Sigmoid colon (tissue), 7 donors: ENCODE measurements at regions of chr17 and their contacts with region 1.

Region 1: DNA sequence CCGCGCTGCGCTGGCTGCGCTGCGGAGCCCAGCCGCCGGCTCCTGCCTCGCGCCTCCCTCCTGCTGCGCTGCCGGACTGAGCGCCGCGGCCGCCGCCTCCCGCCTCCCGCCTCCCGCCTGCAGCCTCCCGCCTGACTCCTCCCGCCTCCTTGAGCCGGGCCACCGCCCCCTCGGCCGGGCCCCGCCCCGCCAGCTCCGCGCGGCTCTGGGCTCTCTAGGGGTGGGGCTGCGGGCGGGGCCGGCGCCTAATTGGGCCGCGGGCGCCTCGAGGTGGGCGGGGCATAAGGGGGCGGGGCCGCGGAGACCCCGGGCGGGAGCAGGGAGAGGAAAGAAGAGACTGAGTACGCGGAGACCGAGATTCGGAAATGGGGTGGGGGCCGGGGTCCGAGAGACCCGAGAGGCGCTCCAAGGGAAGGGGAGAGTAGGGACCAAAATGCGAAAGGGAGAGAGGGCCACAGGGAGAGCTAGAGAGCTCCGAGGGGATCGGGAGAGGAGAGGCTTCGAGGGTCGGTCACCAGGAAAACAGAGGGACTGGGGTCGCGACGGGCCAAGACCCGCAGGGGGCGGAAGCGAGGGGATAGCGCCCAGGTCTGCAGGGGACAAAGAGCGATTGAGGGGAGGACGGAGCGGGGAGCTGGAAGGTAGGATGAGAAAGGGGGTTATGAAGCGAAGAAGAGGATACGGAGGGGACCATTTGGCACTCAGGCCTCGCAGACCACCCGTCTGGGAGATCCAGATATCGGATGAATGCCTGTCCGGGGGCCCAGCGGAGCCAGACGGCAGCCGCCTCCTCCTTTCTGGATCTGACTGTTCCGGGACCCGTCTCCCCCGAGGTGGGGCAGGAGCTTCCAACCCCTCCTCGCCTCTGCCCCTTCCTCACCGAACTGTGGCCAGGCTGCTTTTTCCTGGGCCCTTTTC is at the start of gene C1QL1:
- DNase-seq: peak; percentile 96
- H3K4me3 ChIP-seq: peak within 1 kb of the TSS; percentile 42 to 50 (median 48)
- H3K27ac ChIP-seq: peak within 1 kb of the TSS; percentile 20 to 83 (median 67)
- H3K4me1 ChIP-seq: peaks cover 0 to 40% (median 33%) of the 10 kb centered on the region in 4 donors
- H3K27me3 ChIP-seq: peaks cover 19 to 33% (median 29%) of the 10 kb centered on the region in 3 donors
- CTCF ChIP-seq: peak in 1 of 4 experiments; percentile 11
- EP300 ChIP-seq: no peak
- POLR2A ChIP-seq: peak in 1 of 2 donors; percentile 39
- total RNA-seq, gene C1QL1: 0.41 to 4.3 (median 1.3) TPM

Region 2: GRCh38 chr17:44947461-44948314 is 20.8 kb before region 1 on chr17 and contains the start of gene KIF18B:
- intact Hi-C with region 1: loop called (anchors 2 kb)
- DNase-seq: peak; percentile 95
- H3K4me3 ChIP-seq: peak within 1 kb of the TSS; percentile 27 to 61 (median 50)
- H3K27ac ChIP-seq: peak within 1 kb of the TSS; percentile 42 to 65 (median 60)
- H3K4me1 ChIP-seq: peaks cover 0 to 12% (median 9%) of the 10 kb centered on the region in 4 donors
- H3K27me3 ChIP-seq: no peaks in the 10 kb centered on the region
- CTCF ChIP-seq: no peak
- EP300 ChIP-seq: no peak
- POLR2A ChIP-seq: peak; percentile 52 to 64
- total RNA-seq, gene KIF18B: under 0.01 to 1.4 (median 0.30) TPM

Region 3: GRCh38 chr17:44981221-44981968 is 12.9 kb after region 1 on chr17:
- intact Hi-C with region 1: no loop called
- DNase-seq: no peak
- H3K4me3 ChIP-seq: no peak overlapping the region
- H3K27ac ChIP-seq: peak overlapping the region in 3 of 4 donors; percentile 77 to 82 (median 79)
- H3K4me1 ChIP-seq: peaks cover 0 to 57% (median 52%) of the 10 kb centered on the region in 4 donors
- H3K27me3 ChIP-seq: peaks cover 0 to 4% (median 0%) of the 10 kb centered on the region in 3 donors
- CTCF ChIP-seq: no peak
- EP300 ChIP-seq: no peak
- POLR2A ChIP-seq: no peak

Region 4: GRCh38 chr17:45051060-45051719 is 82.7 kb after region 1 on chr17 and contains the start of gene DCAKD:
- intact Hi-C with region 1: loop called (anchors 5 kb)
- DNase-seq: peak; percentile 97
- H3K4me3 ChIP-seq: peak within 1 kb of the TSS; percentile 45 to 69 (median 60)
- H3K27ac ChIP-seq: peak within 1 kb of the TSS; percentile 88 to 95 (median 92)
- H3K4me1 ChIP-seq: peaks cover 0 to 30% (median 17%) of the 10 kb centered on the region in 4 donors
- H3K27me3 ChIP-seq: no peaks in the 10 kb centered on the region
- CTCF ChIP-seq: no peak
- EP300 ChIP-seq: no peak
- POLR2A ChIP-seq: peak in 1 of 2 donors; percentile 67
- total RNA-seq, gene DCAKD: 25.2 to 46.0 (median 31.9) TPM

Region 5: GRCh38 chr17:45092932-45093430 is 124.5 kb after region 1 on chr17:
- intact Hi-C with region 1: loop called (anchors 5 kb)
- DNase-seq: peak; percentile 97
- H3K4me3 ChIP-seq: no peak overlapping the region
- H3K27ac ChIP-seq: peak overlapping the region; percentile 85 to 95 (median 90)
- H3K4me1 ChIP-seq: peaks cover 0 to 46% (median 38%) of the 10 kb centered on the region in 4 donors
- H3K27me3 ChIP-seq: no peaks in the 10 kb centered on the region
- CTCF ChIP-seq: no peak
- EP300 ChIP-seq: peak in 2 of 4 donors; percentile 33 to 84
- POLR2A ChIP-seq: no peak